MCF 10A (cell line): ENCODE measurements at regions of chr3 and their contacts with region 1.

Region 1: GRCh38 chr3:196739671-196740480 is at the start of gene PAK2:
- DNase-seq: peak; percentile 90
- H3K4me3 Mint-ChIP-seq: peak within 1 kb of the TSS; percentile 98
- H3K27ac Mint-ChIP-seq: peak within 1 kb of the TSS; percentile 98
- H3K4me1 Mint-ChIP-seq: peaks cover 11% of the 10 kb centered on the region
- H3K27me3 Mint-ChIP-seq: no peaks in the 10 kb centered on the region
- CTCF ChIP-seq: no peak
- total RNA-seq, gene PAK2: 119 and 126 TPM in 2 replicates

Region 2: DNA sequence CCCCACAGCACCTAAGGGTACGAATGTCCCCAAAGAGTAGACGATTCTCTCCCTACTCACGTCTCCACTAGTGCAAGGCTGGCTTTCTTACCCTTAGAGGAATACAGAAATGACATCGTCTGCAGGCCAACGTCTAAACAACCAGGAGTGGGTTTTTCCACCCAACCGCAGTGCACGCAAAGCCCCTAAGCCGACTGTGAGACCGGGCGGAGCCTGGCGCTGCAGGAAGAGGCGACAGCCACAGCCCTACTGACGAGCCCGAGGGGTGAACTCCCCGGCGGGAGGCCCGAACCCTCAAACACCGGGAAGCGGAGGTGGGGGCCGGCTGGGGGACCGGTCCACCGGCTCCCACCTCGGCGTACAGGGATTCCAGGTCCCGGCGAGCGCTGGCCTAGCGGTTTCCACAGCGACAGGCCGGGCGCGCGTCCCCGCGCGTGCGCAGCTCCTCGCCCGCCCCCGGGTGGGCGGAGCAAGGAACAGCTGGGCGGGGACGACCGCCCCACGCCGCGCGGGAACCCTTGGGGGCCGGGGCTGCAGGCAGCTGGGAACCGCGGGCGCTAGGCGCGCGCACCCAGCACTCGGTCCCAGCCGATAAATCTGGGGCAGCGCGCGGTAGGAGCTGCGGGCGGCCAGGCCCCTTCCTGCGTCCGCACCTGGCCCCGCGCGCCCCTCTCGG is 27.9 kb before region 1 on chr3 and contains the starts of genes CEP19 and PIGX:
- CTCF ChIA-PET with region 1: no interaction called
- POLR2A ChIA-PET with region 1: interaction called, 30 read pairs
- intact Hi-C with region 1: no loop called
- DNase-seq: peak; percentile 79
- H3K4me3 Mint-ChIP-seq: peak within 1 kb of the TSS; percentile 93
- H3K27ac Mint-ChIP-seq: peak within 1 kb of the TSS; percentile 91
- H3K4me1 Mint-ChIP-seq: peaks cover 5% of the 10 kb centered on the region
- H3K27me3 Mint-ChIP-seq: no peaks in the 10 kb centered on the region
- CTCF ChIP-seq: no peak
- total RNA-seq, gene CEP19: 1.8 and 3.2 TPM in 2 replicates
- total RNA-seq, gene PIGX: 20.8 and 23.2 TPM in 2 replicates

Region 3: GRCh38 chr3:196753201-196753600 is 13.3 kb after region 1 on chr3:
- CTCF ChIA-PET with region 1: interaction called, 3 read pairs
- POLR2A ChIA-PET with region 1: interaction called, 20 read pairs
- intact Hi-C with region 1: no loop called
- DNase-seq: no peak
- H3K4me3 Mint-ChIP-seq: no peak overlapping the region
- H3K27ac Mint-ChIP-seq: no peak overlapping the region
- H3K4me1 Mint-ChIP-seq: peaks cover 32% of the 10 kb centered on the region
- H3K27me3 Mint-ChIP-seq: no peaks in the 10 kb centered on the region
- CTCF ChIP-seq: no peak

Region 4: GRCh38 chr3:196778755-196779154 is 38.9 kb after region 1 on chr3:
- CTCF ChIA-PET with region 1: no interaction called
- POLR2A ChIA-PET with region 1: interaction called, 20 read pairs
- intact Hi-C with region 1: no loop called
- DNase-seq: peak; percentile 20
- H3K4me3 Mint-ChIP-seq: no peak overlapping the region
- H3K27ac Mint-ChIP-seq: peak overlapping the region; percentile 95
- H3K4me1 Mint-ChIP-seq: peaks cover 32% of the 10 kb centered on the region
- H3K27me3 Mint-ChIP-seq: no peaks in the 10 kb centered on the region
- CTCF ChIP-seq: no peak

Region 5: GRCh38 chr3:196804775-196805174 is 64.9 kb after region 1 on chr3:
- CTCF ChIA-PET with region 1: no interaction called
- POLR2A ChIA-PET with region 1: interaction called, 5 read pairs
- intact Hi-C with region 1: loop called (anchors 5 kb)
- DNase-seq: no peak
- H3K4me3 Mint-ChIP-seq: no peak overlapping the region
- H3K27ac Mint-ChIP-seq: no peak overlapping the region
- H3K4me1 Mint-ChIP-seq: no peaks in the 10 kb centered on the region
- H3K27me3 Mint-ChIP-seq: no peaks in the 10 kb centered on the region
- CTCF ChIP-seq: no peak

Region 6: GRCh38 chr3:196902296-196902695 is 162.4 kb after region 1 on chr3:
- CTCF ChIA-PET with region 1: no interaction called
- POLR2A ChIA-PET with region 1: no interaction called
- intact Hi-C with region 1: no loop called
- DNase-seq: no peak
- H3K4me3 Mint-ChIP-seq: no peak overlapping the region
- H3K27ac Mint-ChIP-seq: no peak overlapping the region
- H3K4me1 Mint-ChIP-seq: no peaks in the 10 kb centered on the region
- H3K27me3 Mint-ChIP-seq: no peaks in the 10 kb centered on the region
- CTCF ChIP-seq: no peak

Region 7: GRCh38 chr3:196942226-196942914 is 202.5 kb after region 1 on chr3 and contains the start of gene NCBP2:
- CTCF ChIA-PET with region 1: no interaction called
- POLR2A ChIA-PET with region 1: interaction called, 35 read pairs
- intact Hi-C with region 1: no loop called
- DNase-seq: peak; percentile 97
- H3K4me3 Mint-ChIP-seq: peak within 1 kb of the TSS; percentile 80
- H3K27ac Mint-ChIP-seq: peak within 1 kb of the TSS; percentile 88
- H3K4me1 Mint-ChIP-seq: peaks cover 6% of the 10 kb centered on the region
- H3K27me3 Mint-ChIP-seq: no peaks in the 10 kb centered on the region
- CTCF ChIP-seq: peak; percentile 55
- total RNA-seq, gene NCBP2: 80.9 and 91.8 TPM in 2 replicates

Region 8: GRCh38 chr3:197203714-197204146 is 463.9 kb after region 1 on chr3:
- CTCF ChIA-PET with region 1: no interaction called
- POLR2A ChIA-PET with region 1: no interaction called
- intact Hi-C with region 1: no loop called
- DNase-seq: no peak
- H3K4me3 Mint-ChIP-seq: no peak overlapping the region
- H3K27ac Mint-ChIP-seq: no peak overlapping the region
- H3K4me1 Mint-ChIP-seq: peaks cover 16% of the 10 kb centered on the region
- H3K27me3 Mint-ChIP-seq: no peaks in the 10 kb centered on the region
- CTCF ChIP-seq: no peak